ENCODE measurements at regions of chr17 and their contacts with region 1.

Region 1: GRCh38 chr17:60421273-60421934 is 885 bp upstream of the CHCT1 start:
- DNase-seq: peak; percentile 83
- H3K4me3 Mint-ChIP-seq: peak overlapping the region; percentile 69
- H3K27ac Mint-ChIP-seq: no peak overlapping the region
- H3K4me1 Mint-ChIP-seq: peaks cover 8% of the 10 kb centered on the region
- H3K27me3 Mint-ChIP-seq: peaks cover 13% of the 10 kb centered on the region

Region 2: DNA sequence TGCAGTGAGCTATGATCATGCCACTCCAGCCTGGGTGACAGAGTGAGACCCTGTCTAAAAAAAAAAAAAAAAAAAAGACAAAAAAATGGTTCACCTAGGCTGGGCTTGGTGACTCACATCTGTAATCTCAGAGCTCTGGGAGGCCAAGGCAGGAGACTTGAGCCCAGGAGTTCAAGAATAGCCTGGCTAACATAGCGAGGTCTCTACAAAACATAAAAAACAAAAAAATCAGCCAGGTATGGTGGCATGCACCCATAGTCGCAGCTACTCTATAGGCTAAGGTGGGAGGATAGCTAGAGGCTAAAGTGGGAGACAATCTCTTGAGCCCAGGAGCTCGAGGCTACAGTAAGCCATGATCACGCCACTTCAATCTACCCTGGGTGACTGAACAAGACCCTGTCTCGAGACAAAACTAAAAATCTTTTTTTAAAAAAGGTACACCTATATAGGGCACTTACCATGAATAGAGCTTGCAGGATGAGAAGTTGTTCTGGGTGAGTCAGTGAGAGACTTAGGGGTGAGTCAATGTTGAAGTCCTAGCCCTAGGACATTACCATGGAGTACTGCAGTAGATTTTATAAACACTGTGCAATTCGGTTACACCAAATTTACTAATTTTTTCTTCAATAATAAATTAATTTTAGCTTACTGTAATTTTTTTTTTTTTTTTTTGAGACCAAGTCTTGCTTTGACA is 48.5 kb before region 1 on chr17:
- CTCF ChIA-PET with region 1: no interaction called
- DNase-seq: no peak
- H3K4me3 Mint-ChIP-seq: no peak overlapping the region
- H3K27ac Mint-ChIP-seq: peak overlapping the region; percentile 45
- H3K4me1 Mint-ChIP-seq: peaks cover 15% of the 10 kb centered on the region
- H3K27me3 Mint-ChIP-seq: no peaks in the 10 kb centered on the region

Region 3: DNA sequence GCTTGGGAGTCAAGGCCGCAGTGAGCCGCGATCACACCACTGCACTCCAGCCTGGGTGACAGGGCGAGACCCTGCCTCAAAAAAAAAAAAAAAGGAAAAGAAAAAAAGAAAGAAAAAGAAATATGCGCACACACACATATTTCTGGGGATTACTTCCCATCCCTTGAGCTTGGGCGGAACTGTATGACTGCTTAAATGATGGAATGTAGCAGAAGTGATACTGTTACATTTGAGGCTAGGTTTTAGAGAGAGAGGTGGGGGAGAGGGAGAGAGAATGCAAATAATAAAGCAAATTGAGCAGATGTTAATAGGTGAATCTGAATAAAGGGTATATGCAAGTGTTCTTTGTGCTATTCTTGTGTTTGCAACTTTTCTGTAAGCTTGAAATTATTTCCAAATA is 17.4 kb before region 1 on chr17:
- CTCF ChIA-PET with region 1: interaction called, 14 read pairs
- DNase-seq: no peak
- H3K4me3 Mint-ChIP-seq: no peak overlapping the region
- H3K27ac Mint-ChIP-seq: no peak overlapping the region
- H3K4me1 Mint-ChIP-seq: peaks cover 5% of the 10 kb centered on the region
- H3K27me3 Mint-ChIP-seq: peaks cover 38% of the 10 kb centered on the region